ENCODE measurements at regions of chr13 and their contacts with region 1.

Region 1: DNA sequence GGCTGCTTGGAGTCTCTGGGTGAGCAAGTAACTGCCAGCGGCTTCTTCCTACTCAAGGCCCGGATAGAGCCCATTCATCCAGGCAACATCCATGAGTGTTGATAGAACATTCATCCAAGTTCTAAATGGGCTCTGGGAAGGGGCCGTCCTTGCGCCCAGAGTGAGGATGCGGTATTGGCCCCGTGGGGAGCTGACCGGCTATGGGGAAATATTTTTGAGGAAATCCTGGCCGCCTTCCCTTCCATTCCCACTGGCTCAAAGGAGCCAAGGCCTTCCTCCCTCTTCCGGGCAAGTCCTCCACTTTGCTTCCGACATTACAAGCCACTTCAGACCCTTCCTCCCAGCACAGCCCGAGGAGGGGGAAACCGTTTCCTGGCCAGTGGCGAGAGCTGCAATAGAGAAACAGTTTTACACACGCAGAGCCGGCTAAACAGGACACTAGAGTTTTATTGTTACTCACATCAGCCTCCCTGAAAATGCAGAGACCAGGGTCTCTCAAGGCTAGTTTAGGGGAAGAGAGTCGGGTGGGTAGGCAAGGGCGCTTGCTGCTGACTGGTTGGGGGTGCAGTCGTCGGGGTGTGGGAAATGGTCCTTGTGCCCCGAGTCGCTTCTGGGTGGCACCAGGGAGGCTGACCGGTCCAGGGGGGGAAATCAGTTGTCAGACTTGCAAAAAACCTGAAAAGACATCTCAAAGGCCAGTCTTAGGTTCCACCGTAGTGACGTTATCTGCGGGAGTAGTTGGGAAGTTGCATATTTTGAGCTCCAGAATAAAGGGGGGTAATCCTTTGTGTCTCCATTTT is 37.5 kb downstream of the C13orf46 start:
- DNase-seq: no peak
- ATAC-seq: no peak
- H3K4me3 ChIP-seq: no peak overlapping the region
- H3K27ac ChIP-seq: no peak overlapping the region
- H3K4me1 ChIP-seq: no peaks in the 10 kb centered on the region
- H3K27me3 ChIP-seq: no peaks in the 10 kb centered on the region
- CTCF ChIP-seq: no peak

Region 2: GRCh38 chr13:113805431-113806103 is 130.8 kb before region 1 on chr13:
- CTCF ChIA-PET with region 1: interaction called, 14 read pairs
- POLR2A ChIA-PET with region 1: no interaction called
- in situ Hi-C with region 1: no loop called
- intact Hi-C with region 1: no loop called
- DNase-seq: no peak
- ATAC-seq: no peak
- H3K4me3 ChIP-seq: no peak overlapping the region
- H3K27ac ChIP-seq: no peak overlapping the region
- H3K4me1 ChIP-seq: no peaks in the 10 kb centered on the region
- H3K27me3 ChIP-seq: no peaks in the 10 kb centered on the region
- CTCF ChIP-seq: no peak

Region 3: DNA sequence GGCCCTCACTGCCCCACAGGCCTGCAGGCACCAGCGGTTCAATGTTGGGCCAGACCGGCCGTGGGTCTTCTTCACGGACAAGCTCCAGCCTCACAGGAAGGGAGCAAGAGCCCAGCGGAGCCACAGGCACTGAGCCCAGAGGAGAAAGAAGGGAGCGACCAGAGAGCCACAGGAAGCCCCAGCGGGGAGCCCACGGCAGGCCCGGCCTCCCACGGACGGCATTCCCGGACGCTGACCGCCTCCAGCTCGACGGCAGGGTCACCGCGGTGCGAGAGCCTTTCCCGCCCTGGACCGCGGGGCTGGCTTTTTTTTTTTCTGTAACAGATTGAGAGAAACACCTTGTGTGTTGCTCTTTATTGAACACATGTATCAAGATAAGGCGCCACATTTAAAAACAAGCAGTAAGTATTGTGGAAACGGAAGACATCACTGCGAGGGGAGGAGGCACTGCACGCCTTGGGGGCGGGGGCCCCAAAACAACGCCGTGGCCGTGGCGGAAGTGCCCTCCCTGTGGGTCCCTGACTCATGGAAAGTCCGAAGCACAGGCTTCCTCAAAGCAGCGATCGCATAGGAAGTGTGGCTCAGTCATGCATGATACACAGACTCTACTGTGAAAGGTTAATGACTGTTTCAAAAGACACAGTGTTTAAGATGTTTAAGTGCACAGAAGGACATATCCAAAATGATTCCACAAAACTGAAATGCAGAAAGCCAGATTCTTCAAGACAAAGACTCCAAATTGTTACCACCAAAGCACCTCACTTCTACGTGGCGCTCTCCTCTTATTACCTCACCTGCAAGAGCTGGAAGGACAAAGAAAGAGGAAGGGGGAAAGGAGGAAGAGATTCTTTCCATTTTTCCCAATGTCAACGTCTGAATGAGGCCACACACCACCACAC is 192.5 kb after region 1 on chr13:
- CTCF ChIA-PET with region 1: no interaction called
- POLR2A ChIA-PET with region 1: no interaction called
- in situ Hi-C with region 1: no loop called
- intact Hi-C with region 1: no loop called
- DNase-seq: no peak
- ATAC-seq: peak; percentile 52
- H3K4me3 ChIP-seq: peak overlapping the region; percentile 81 to 85
- H3K27ac ChIP-seq: peak overlapping the region; percentile 95
- H3K4me1 ChIP-seq: peaks cover 47% of the 10 kb centered on the region
- H3K27me3 ChIP-seq: no peaks in the 10 kb centered on the region
- CTCF ChIP-seq: no peak